PC-9 (cell line): ENCODE measurements at regions of chr21 and their contacts with region 1.

Region 1: DNA sequence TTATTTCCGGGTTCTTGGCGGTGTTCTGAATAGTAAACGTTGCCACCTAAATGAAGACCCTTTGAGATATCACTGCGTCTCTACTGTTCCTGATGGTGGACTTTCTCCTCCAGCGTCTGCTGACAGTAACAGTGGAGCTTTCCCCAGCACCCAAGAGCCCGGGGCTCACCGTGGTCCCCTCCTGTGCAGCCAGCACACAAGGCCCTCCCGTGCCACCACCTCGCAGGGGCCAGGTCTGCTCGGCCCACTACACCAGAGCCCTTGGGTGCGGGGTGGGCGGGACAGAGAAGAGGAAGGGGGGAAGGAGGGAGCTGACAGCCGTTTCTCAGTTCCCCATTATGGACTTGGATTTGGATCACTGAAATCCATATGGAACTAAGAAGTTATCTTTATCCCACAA is 61.2 kb upstream of the TRAPPC10 start:
- DNase-seq: no peak
- H3K4me3 ChIP-seq: no peak overlapping the region
- H3K27ac ChIP-seq: no peak overlapping the region
- H3K4me1 ChIP-seq: no peaks in the 10 kb centered on the region
- H3K27me3 ChIP-seq: no peaks in the 10 kb centered on the region
- CTCF ChIP-seq: no peak

Region 2: GRCh38 chr21:43827015-43827611 is 123.8 kb before region 1 on chr21:
- CTCF ChIA-PET with region 1: no interaction called
- POLR2A ChIA-PET with region 1: interaction called, 15 read pairs
- intact Hi-C with region 1: no loop called
- DNase-seq: peak in 1 of 2 experiments; percentile 35
- H3K4me3 ChIP-seq: no peak overlapping the region
- H3K27ac ChIP-seq: no peak overlapping the region
- H3K4me1 ChIP-seq: no peaks in the 10 kb centered on the region
- H3K27me3 ChIP-seq: peaks cover 3% of the 10 kb centered on the region; the same call in 1 of the 2 replicates
- CTCF ChIP-seq: no peak

Region 3: GRCh38 chr21:44286833-44287681 is 336.1 kb after region 1 on chr21:
- CTCF ChIA-PET with region 1: no interaction called
- POLR2A ChIA-PET with region 1: interaction called, 23 read pairs
- intact Hi-C with region 1: no loop called
- DNase-seq: no peak
- H3K4me3 ChIP-seq: no peak overlapping the region
- H3K27ac ChIP-seq: no peak overlapping the region
- H3K4me1 ChIP-seq: no peaks in the 10 kb centered on the region
- H3K27me3 ChIP-seq: peaks cover 21% of the 10 kb centered on the region
- CTCF ChIP-seq: no peak